Activated B cell treated with CpG ODN at 0.5 μM for 24 hours (primary cell): ENCODE measurements at regions of chr12 and their contacts with region 1.

Region 1: DNA sequence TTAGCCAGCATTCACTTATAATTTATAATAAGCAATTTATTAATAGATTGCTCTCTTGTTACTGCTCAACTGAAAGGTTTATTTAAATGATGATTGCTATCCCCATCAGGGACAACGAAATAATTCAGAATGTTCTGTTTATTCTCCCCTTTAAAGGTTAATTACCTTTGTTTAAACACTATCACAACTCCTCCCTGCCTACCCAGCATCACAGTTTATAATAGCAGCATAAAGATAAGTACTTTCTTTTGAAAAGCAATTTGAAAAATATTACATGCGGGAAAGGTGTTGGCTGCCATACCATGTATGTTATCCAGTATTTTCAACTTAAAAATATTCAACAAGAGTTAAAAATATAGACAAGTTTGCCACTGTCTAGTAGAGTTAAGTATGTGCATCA is 30.6 kb downstream of the SCAF11 start:
- DNase-seq: no peak
- ATAC-seq: no peak
- H3K4me3 Mint-ChIP-seq: no peak overlapping the region
- H3K27ac Mint-ChIP-seq: no peak overlapping the region
- H3K4me1 Mint-ChIP-seq: peaks cover 12% of the 10 kb centered on the region
- H3K27me3 Mint-ChIP-seq: no peaks in the 10 kb centered on the region
- CTCF ChIP-seq: no peak

Region 2: GRCh38 chr12:45928309-45928708 is 31.4 kb before region 1 on chr12:
- CTCF ChIA-PET with region 1: no interaction called
- POLR2A ChIA-PET with region 1: no interaction called
- intact Hi-C with region 1: loop called (anchors 5 kb)
- DNase-seq: no peak
- ATAC-seq: no peak
- H3K4me3 Mint-ChIP-seq: no peak overlapping the region
- H3K27ac Mint-ChIP-seq: peak overlapping the region; percentile 2
- H3K4me1 Mint-ChIP-seq: no peaks in the 10 kb centered on the region
- H3K27me3 Mint-ChIP-seq: no peaks in the 10 kb centered on the region
- CTCF ChIP-seq: no peak

Region 3: DNA sequence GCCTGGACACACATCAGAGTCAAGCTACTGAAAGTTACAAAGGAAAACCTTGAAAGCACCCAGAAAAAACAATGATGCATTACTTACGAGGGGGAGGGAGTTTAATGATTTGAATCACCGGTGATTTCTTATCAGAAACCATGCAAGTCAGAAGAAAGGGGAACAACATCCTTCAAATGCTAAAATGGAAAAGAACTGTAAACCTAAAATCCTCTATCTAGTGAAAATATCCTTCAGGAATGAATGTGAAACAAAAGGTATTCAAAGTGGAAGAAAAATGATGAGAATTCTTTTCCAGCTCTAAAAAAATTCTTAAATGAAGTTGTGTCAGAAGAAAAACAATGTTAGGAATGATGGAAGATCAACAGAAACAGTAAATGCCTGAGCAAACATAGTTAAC is 13.8 kb after region 1 on chr12:
- CTCF ChIA-PET with region 1: no interaction called
- POLR2A ChIA-PET with region 1: no interaction called
- intact Hi-C with region 1: loop called (anchors 2 kb)
- DNase-seq: no peak
- ATAC-seq: peak; percentile 25
- H3K4me3 Mint-ChIP-seq: peak overlapping the region; percentile 39
- H3K27ac Mint-ChIP-seq: peak overlapping the region; percentile 75
- H3K4me1 Mint-ChIP-seq: peaks cover 81% of the 10 kb centered on the region
- H3K27me3 Mint-ChIP-seq: no peaks in the 10 kb centered on the region
- CTCF ChIP-seq: no peak